ENCODE measurements at regions of chr12 and their contacts with region 1.

Region 1: DNA sequence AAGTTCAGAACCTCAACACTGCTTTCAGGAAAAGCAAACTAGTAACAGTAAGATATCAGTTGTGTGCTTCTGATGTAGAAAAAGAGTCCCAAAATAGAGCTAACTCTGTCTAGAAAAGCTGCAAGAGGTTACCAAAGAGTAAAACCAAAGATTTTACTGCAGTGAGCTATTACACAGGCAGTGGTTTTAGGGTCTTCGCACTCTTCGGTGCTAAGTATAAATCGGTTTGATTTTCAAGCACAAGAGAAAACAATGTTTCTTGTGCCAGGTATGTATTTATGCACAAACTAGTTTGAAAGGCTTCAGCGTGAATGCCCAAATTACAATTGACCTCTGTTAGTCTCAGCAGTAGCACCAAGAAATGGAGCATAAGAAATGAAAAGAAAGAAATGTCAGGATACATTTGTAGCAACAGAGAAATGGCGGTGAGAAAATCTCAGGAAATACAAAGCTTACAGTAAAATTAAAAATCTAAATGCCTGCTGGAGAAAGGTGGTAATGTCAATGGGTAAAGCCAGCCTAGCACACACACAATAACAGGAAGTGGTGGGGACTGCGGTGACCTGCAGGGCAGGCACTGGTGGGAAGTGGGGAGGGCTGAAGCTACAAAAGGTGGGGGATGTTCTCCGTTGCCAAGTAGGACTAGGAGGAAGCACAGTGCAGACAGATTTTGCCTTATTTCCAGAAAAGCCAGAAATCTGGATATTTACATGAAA is 18.0 kb upstream of the DYRK2 start:
- DNase-seq: peak; percentile 47
- ATAC-seq: peak; percentile 100
- H3K4me3 Mint-ChIP-seq: peak overlapping the region; percentile 61
- H3K27ac Mint-ChIP-seq: peak overlapping the region; percentile 87
- H3K4me1 Mint-ChIP-seq: peaks cover 64% of the 10 kb centered on the region
- H3K27me3 Mint-ChIP-seq: no peaks in the 10 kb centered on the region
- CTCF ChIP-seq: no peak

Region 2: DNA sequence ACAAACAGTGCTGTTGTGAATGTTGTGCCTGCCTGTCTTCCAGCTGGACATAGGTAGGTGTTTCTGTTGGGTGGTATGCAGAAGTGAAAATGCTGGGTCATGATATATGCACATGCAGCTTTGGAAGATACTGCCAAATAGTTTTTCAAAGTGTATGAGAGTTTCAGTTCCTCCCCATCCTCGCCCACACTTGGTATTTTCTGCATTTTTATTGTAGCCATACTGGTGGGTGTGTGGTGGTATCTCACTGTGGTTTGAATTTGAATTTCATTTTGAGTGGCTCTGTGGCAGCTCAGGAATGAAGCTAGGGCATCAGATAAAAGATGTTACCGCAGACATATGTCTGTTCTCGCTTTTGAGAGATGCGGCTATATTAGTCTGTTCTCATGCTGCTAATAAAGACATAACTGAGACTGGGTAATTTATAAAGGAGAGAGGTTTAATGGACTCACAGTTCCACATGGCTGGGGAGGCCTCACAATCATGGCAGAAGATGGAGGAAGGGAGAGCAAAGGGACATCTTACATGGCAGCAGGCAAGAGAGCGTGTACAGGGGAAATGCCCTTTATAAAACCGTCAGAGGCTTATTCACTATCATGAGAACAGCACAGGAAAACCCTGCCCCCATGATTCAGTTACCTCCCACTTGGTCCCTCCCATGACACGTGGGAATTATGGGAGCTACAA is 178.3 kb before region 1 on chr12:
- CTCF ChIA-PET with region 1: no interaction called
- POLR2A ChIA-PET with region 1: no interaction called
- intact Hi-C with region 1: loop called (anchors 2 kb)
- DNase-seq: no peak
- ATAC-seq: peak; percentile 60
- H3K4me3 Mint-ChIP-seq: peak overlapping the region; percentile 17
- H3K27ac Mint-ChIP-seq: peak overlapping the region; percentile 54
- H3K4me1 Mint-ChIP-seq: peaks cover 40% of the 10 kb centered on the region
- H3K27me3 Mint-ChIP-seq: peaks cover 12% of the 10 kb centered on the region
- CTCF ChIP-seq: no peak

Region 3: GRCh38 chr12:67501362-67501761 is 129.2 kb before region 1 on chr12:
- CTCF ChIA-PET with region 1: no interaction called
- POLR2A ChIA-PET with region 1: no interaction called
- intact Hi-C with region 1: no loop called
- DNase-seq: no peak
- ATAC-seq: no peak
- H3K4me3 Mint-ChIP-seq: no peak overlapping the region
- H3K27ac Mint-ChIP-seq: no peak overlapping the region
- H3K4me1 Mint-ChIP-seq: peaks cover 2% of the 10 kb centered on the region
- H3K27me3 Mint-ChIP-seq: peaks cover 5% of the 10 kb centered on the region
- CTCF ChIP-seq: no peak

Region 4: GRCh38 chr12:67592216-67593011 is 38.1 kb before region 1 on chr12:
- CTCF ChIA-PET with region 1: no interaction called
- POLR2A ChIA-PET with region 1: no interaction called
- intact Hi-C with region 1: loop called (anchors 5 kb)
- DNase-seq: no peak
- ATAC-seq: peak; percentile 60
- H3K4me3 Mint-ChIP-seq: peak overlapping the region; percentile 2
- H3K27ac Mint-ChIP-seq: peak overlapping the region; percentile 15
- H3K4me1 Mint-ChIP-seq: peaks cover 36% of the 10 kb centered on the region
- H3K27me3 Mint-ChIP-seq: peaks cover 1% of the 10 kb centered on the region
- CTCF ChIP-seq: peak; percentile 57

Region 5: GRCh38 chr12:67827820-67828383 is 197.4 kb after region 1 on chr12:
- CTCF ChIA-PET with region 1: no interaction called
- POLR2A ChIA-PET with region 1: no interaction called
- intact Hi-C with region 1: no loop called
- DNase-seq: no peak
- ATAC-seq: peak; percentile 64
- H3K4me3 Mint-ChIP-seq: no peak overlapping the region
- H3K27ac Mint-ChIP-seq: no peak overlapping the region
- H3K4me1 Mint-ChIP-seq: peaks cover 7% of the 10 kb centered on the region
- H3K27me3 Mint-ChIP-seq: no peaks in the 10 kb centered on the region
- CTCF ChIP-seq: no peak

Region 6: GRCh38 chr12:67991158-67991557 is 360.6 kb after region 1 on chr12:
- CTCF ChIA-PET with region 1: no interaction called
- POLR2A ChIA-PET with region 1: interaction called, 5 read pairs
- intact Hi-C with region 1: loop called (anchors 5 kb)
- DNase-seq: peak; percentile 32
- ATAC-seq: peak; percentile 90
- H3K4me3 Mint-ChIP-seq: peak overlapping the region; percentile 74
- H3K27ac Mint-ChIP-seq: peak overlapping the region; percentile 94
- H3K4me1 Mint-ChIP-seq: peaks cover 69% of the 10 kb centered on the region
- H3K27me3 Mint-ChIP-seq: no peaks in the 10 kb centered on the region
- CTCF ChIP-seq: no peak

Measured in activated B cell treated with CpG ODN at 0.5 μM for 24 hours (primary cell).